Dorsolateral prefrontal cortex (tissue), 120 donors: ENCODE measurements at regions of chr16 and their contacts with region 1.

Region 1: DNA sequence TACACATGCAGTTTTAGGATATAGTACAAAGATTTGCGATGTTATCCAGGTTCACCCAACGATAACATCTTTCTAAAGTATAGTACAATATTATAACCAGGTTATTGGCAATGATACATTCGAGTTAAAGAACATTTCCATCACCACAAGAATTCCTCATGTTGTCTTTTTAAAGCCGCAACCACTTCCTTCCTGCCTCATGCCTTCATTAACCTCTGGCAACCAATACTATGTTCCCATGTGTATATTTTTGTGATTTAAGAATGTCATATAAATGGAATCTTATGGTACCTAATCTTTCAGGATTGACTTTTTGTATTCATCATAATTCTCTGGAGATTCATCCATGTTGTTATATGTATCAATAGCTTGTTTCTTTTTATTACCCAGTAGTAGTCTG is 1183.2 kb downstream of the CDH11 start:
- DNase-seq: no peak
- H3K4me3 ChIP-seq: no peak overlapping the region
- H3K27ac ChIP-seq: no peak overlapping the region
- H3K27me3 ChIP-seq: no peaks in the 10 kb centered on the region
- CTCF ChIP-seq: no peak

Region 2: GRCh38 chr16:63816276-63816675 is 122.4 kb before region 1 on chr16:
- intact Hi-C with region 1: no loop called
- DNase-seq: no peak
- H3K4me3 ChIP-seq: no peak overlapping the region
- H3K27ac ChIP-seq: no peak overlapping the region
- H3K27me3 ChIP-seq: peaks cover 0 to 2% (median 0%) of the 10 kb centered on the region in 45 donors
- CTCF ChIP-seq: no peak

Region 3: GRCh38 chr16:63876103-63876502 is 62.6 kb before region 1 on chr16:
- intact Hi-C with region 1: loop called in 1 of 2 experiments (anchors 10 kb)
- DNase-seq: no peak
- H3K4me3 ChIP-seq: no peak overlapping the region
- H3K27ac ChIP-seq: no peak overlapping the region
- H3K27me3 ChIP-seq: no peaks in the 10 kb centered on the region
- CTCF ChIP-seq: no peak

Region 4: DNA sequence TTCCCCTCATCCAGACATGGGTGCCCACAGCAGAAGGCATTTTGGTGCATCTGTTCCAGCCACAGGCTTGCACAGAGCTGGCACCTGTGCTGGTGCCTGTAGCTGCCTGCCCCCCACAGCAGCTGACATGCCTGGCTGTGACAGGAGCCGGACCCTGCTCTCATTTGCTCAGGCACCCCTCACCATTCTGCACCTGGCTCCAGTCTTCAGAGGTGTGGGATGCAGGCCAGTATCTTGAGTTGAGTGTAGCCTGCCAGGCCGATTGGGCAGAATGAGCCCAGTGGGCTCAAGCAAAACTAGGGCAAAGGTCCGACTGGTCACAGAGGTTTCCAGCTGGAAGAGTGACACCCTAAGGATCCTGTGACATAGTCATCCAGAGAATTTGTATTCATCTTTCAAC is 295.5 kb after region 1 on chr16:
- intact Hi-C with region 1: no loop called
- DNase-seq: no peak
- H3K4me3 ChIP-seq: no peak overlapping the region
- H3K27ac ChIP-seq: no peak overlapping the region
- H3K27me3 ChIP-seq: no peaks in the 10 kb centered on the region
- CTCF ChIP-seq: no peak